Activated T-helper 2 cell treated with anti-CD3 and anti-CD28 coated beads, Interferon-gamma antibody, Interleukin-2, Interleukin-4, amounts not matched to agents 10 μg/mL and 5 μg/mL and 100 μg/mL, durations not matched to agents 14 hours and 24 hours and 36 hours (primary cell): ENCODE measurements at regions of chr6 and their contacts with region 1.

Region 1: GRCh38 chr6:30828027-30828960 is 56.0 kb upstream of the DDR1 start:
- DNase-seq: peak; percentile 65
- H3K4me3 Mint-ChIP-seq: peak overlapping the region; percentile 86
- H3K27ac Mint-ChIP-seq: peak overlapping the region; percentile 94
- H3K4me1 Mint-ChIP-seq: peaks cover 55% of the 10 kb centered on the region
- H3K27me3 Mint-ChIP-seq: no peaks in the 10 kb centered on the region

Region 2: DNA sequence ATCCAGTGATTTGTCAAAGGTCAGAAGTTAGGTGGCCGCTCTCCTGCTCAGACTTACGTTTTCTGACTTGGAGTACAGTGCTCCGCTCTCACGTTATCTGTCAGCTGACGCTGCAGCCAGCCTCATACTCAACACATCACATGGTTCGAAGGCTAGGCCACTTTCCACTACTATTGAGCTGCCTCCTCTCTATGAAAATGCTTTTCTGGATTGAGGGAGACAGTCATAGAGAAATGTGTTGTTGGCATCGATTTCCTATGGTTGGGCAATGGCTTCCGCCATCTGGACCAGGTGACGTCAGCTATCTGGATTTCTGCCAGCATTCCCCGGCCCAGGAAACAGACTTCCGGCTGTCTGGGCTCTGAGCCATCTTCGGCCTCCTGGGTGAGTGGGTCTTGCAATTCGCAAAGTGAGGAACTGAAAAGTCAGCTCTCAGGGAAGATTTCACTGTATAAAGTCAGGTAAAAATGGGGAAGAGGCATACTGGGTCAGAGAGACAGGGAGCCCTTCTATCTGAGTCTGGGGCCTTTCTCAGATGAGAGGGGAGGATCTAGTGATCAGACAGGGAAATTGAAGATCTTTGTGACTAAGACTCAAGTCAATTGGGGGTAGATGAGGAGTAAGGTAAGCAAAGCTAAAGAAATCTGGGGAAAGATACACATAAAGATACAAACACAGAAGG is 46.4 kb before region 1 on chr6:
- intact Hi-C with region 1: no loop called
- DNase-seq: no peak
- H3K4me3 Mint-ChIP-seq: peak overlapping the region; percentile 55
- H3K27ac Mint-ChIP-seq: peak overlapping the region; percentile 65
- H3K4me1 Mint-ChIP-seq: peaks cover 62% of the 10 kb centered on the region
- H3K27me3 Mint-ChIP-seq: no peaks in the 10 kb centered on the region

Region 3: GRCh38 chr6:30877419-30878371 is 49.4 kb after region 1 on chr6:
- intact Hi-C with region 1: loop called (anchors 1 kb)
- DNase-seq: peak; percentile 64
- H3K4me3 Mint-ChIP-seq: peak overlapping the region; percentile 60
- H3K27ac Mint-ChIP-seq: peak overlapping the region; percentile 85
- H3K4me1 Mint-ChIP-seq: peaks cover 19% of the 10 kb centered on the region
- H3K27me3 Mint-ChIP-seq: no peaks in the 10 kb centered on the region

Region 4: DNA sequence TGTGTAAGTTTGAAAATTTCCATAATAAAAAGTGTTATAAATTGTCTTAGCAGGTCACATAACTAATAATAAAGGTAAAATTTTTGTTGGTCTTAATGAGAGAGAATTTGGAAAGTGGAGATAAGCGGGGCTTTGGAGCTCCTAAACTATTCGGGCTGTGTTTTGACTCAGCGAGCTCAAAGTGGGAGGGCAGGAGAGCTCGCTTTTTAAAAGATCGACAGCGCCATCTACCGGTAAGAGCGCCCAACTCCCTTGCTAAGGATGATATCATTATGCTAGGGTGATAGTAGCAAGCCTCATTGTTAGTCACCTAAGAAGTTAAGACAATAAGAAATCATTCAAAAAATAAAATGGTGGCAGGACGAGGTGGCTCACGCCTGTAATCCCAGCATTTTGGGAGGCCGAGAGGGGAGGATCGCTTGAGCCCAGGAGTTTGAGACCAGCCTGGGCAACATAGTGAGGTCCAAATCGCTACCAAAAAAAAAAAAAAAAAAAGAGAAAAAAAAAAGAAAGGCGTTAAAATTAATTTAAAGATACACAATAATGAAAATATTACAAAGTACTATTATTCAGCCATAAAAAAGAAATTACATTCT is 259.3 kb after region 1 on chr6:
- intact Hi-C with region 1: loop called (anchors 1 kb)
- DNase-seq: peak; percentile 78
- H3K4me3 Mint-ChIP-seq: no peak overlapping the region
- H3K27ac Mint-ChIP-seq: no peak overlapping the region
- H3K4me1 Mint-ChIP-seq: peaks cover 9% of the 10 kb centered on the region
- H3K27me3 Mint-ChIP-seq: peaks cover 17% of the 10 kb centered on the region

Region 5: GRCh38 chr6:31441365-31442267 is 613.3 kb after region 1 on chr6:
- intact Hi-C with region 1: no loop called
- DNase-seq: peak; percentile 71
- H3K4me3 Mint-ChIP-seq: no peak overlapping the region
- H3K27ac Mint-ChIP-seq: no peak overlapping the region
- H3K4me1 Mint-ChIP-seq: peaks cover 5% of the 10 kb centered on the region
- H3K27me3 Mint-ChIP-seq: peaks cover 66% of the 10 kb centered on the region